Activated naive CD4-positive, alpha-beta T cell treated with anti-CD3 and anti-CD28 coated beads for 36 hours (primary cell): ENCODE measurements at regions of chr12 and their contacts with region 1.

Region 1: DNA sequence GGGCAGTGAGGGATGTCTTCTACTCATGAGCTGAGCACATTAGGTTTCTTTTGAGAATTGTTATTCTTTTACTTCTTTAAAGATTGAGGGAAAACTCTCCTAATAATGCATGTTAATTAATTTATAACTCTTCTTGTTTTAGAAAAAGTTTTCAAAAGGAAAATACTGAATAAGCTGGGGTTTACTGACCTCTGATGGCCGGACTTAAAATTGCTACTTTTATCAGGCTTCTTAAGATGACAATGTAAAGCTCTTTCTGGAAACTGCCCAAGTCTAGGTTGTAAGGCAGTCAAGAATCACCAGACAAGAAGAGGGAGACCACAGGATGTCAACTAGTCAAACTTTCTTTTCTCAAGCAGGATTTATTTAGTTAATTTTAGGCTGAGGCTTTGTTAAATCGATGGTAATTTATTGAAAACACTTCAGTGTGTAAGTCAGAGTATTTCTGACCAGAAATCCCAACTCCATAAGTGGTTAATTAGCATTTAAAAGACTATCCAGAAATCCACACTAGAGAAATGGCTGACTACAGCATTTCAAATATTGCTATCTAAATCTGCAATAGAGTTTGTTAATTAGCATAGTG is 82.1 kb downstream of the AVPR1A start:
- DNase-seq: no peak
- H3K4me3 Mint-ChIP-seq: no peak overlapping the region
- H3K27ac Mint-ChIP-seq: no peak overlapping the region
- H3K4me1 Mint-ChIP-seq: no peaks in the 10 kb centered on the region
- H3K27me3 Mint-ChIP-seq: peaks cover 2% of the 10 kb centered on the region

Region 2: DNA sequence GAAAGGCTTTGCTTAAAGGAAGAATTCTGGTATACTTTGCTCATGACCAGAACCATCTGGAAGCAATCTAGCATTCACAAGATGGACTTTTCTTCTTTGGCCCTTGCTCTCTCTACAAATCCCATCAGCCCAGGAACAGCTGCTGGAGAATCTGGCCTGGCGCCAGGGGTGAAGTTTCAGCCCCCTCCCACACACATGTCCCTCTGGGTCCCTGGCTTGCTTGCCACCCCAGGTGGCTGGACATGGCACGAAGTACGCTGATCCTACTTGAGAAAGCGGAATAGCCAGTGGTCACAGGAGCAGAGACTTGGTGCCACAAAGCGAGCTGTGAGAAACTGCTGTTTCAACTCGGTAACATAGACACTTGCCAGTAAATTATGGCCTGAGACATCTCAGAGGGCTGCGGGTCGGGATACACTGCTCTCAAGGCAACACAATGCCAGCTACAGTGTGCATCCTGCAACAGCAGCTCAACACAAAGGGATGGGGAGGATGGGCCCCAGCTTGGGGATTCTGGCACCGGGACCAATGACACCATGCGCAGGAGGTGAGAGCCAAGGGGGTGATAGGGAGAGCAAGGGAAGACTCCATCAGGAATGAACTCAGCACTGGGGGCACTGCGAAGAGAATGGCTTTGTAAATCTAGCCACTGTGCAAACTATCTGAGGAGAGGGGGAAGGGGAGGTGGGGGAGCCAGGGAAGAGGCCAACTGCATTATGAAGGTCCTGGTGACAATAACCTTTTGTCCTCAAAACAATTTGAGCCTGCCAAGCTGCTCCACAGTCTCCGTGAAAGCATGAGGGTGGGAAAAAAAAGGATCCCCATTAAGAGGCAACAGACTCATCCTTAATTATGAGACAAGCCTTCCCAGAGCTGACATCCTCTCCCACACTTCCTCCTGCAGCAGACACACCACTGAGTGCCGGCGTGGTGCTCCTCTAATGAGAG is 353.9 kb before region 1 on chr12:
- CTCF ChIA-PET with region 1: no interaction called
- intact Hi-C with region 1: no loop called
- DNase-seq: no peak
- H3K4me3 Mint-ChIP-seq: no peak overlapping the region
- H3K27ac Mint-ChIP-seq: no peak overlapping the region
- H3K4me1 Mint-ChIP-seq: no peaks in the 10 kb centered on the region
- H3K27me3 Mint-ChIP-seq: no peaks in the 10 kb centered on the region

Region 3: GRCh38 chr12:62813031-62813829 is 255.7 kb before region 1 on chr12:
- CTCF ChIA-PET with region 1: interaction called, 12 read pairs
- intact Hi-C with region 1: loop called (anchors 2 kb)
- DNase-seq: peak; percentile 60
- H3K4me3 Mint-ChIP-seq: peak overlapping the region; percentile 52
- H3K27ac Mint-ChIP-seq: no peak overlapping the region
- H3K4me1 Mint-ChIP-seq: peaks cover 8% of the 10 kb centered on the region
- H3K27me3 Mint-ChIP-seq: peaks cover 16% of the 10 kb centered on the region

Region 4: GRCh38 chr12:63028951-63029350 is 40.0 kb before region 1 on chr12:
- CTCF ChIA-PET with region 1: no interaction called
- intact Hi-C with region 1: no loop called
- DNase-seq: no peak
- H3K4me3 Mint-ChIP-seq: no peak overlapping the region
- H3K27ac Mint-ChIP-seq: no peak overlapping the region
- H3K4me1 Mint-ChIP-seq: no peaks in the 10 kb centered on the region
- H3K27me3 Mint-ChIP-seq: peaks cover 5% of the 10 kb centered on the region

Region 5: DNA sequence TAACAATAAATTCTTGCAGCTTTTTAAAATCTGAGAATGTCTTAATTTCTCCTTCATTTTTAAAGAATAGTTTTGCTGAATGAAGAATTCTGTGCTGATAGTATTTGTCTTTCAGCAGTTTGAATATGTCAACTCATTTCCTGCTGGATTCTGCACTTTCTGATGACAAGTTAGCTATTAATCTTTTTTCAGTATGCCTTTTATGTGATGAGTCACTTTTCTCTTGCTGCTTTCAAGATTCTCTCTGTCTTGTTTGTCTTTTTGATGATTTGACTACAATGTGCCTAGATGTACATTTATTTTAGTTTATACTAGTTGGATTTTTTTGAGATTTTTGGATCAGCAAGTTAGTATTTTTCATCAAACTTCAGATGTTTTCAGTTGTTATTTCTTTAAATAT is 169.9 kb after region 1 on chr12:
- CTCF ChIA-PET with region 1: no interaction called
- intact Hi-C with region 1: no loop called
- DNase-seq: no peak
- H3K4me3 Mint-ChIP-seq: no peak overlapping the region
- H3K27ac Mint-ChIP-seq: no peak overlapping the region
- H3K4me1 Mint-ChIP-seq: no peaks in the 10 kb centered on the region
- H3K27me3 Mint-ChIP-seq: no peaks in the 10 kb centered on the region